Activated CD4-positive, alpha-beta memory T cell treated with anti-CD3 and anti-CD28 coated beads for 36 hours (primary cell): ENCODE measurements at regions of chr14 and their contacts with region 1.

Region 1: DNA sequence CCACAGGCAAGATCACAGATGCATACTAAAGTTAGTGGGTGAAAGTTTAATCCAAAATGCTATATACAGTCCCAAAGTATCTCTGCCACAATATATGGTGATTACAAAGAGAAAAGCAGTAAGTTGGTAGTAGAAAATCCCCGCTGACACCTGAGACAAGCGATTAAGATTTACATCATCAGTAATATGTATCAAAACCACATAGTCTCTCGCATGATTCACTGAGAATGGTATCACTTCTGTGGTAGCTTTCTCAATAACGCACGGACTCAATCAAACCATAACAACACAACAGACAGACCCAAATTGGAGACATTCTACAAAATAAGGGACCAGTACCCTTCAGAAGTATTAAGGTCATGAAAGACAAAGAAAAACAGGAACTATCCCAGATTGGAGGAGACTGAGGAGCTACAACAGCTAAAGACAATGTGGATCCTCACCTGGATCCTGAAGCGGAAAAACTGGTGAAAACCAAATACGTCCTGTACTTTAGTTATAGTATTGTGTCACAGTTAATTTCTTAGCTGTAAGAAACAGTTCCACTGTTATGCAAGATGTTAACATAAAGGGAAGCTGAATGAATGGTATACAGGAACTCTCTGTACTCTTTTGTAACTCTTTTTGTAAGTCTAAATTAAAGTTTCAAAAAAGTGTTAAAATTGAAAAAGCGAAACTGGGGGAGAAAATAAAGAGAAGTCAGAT is 51.0 kb downstream of the SPTLC2 start:
- DNase-seq: no peak
- H3K4me3 Mint-ChIP-seq: no peak overlapping the region
- H3K27ac Mint-ChIP-seq: peak overlapping the region; percentile 12
- H3K4me1 Mint-ChIP-seq: peaks cover 8% of the 10 kb centered on the region
- H3K27me3 Mint-ChIP-seq: no peaks in the 10 kb centered on the region

Region 2: DNA sequence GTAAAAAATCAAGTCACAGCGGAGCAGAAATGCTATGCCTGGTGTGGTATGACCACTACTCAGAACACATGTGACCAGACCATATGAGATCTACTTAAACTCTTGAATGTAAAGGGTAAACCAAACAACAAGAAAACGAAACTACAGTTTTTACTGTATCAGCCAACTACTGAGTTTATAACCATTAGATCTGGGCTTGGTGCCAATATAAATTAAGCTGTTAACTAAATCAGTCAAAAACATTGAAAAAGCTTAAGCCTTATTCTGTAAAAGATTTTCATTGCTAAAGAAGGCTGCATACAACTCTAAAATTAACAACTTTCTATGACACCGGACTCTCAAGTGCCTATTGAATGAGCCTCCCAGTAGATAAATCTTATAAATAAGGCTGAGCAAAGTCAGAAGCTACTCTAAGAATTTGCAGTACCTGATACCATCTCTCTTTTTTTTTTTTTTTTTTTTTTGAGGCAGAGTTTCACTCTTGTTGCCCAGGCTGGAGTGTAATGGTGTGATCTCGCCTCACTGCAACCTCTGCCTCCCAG is 15.6 kb after region 1 on chr14:
- CTCF ChIA-PET with region 1: no interaction called
- POLR2A ChIA-PET with region 1: no interaction called
- intact Hi-C with region 1: loop called (anchors 2 kb)
- DNase-seq: no peak
- H3K4me3 Mint-ChIP-seq: no peak overlapping the region
- H3K27ac Mint-ChIP-seq: peak overlapping the region; percentile 28
- H3K4me1 Mint-ChIP-seq: peaks cover 23% of the 10 kb centered on the region
- H3K27me3 Mint-ChIP-seq: no peaks in the 10 kb centered on the region

Region 3: GRCh38 chr14:77593501-77593961 is 28.1 kb after region 1 on chr14:
- CTCF ChIA-PET with region 1: no interaction called
- POLR2A ChIA-PET with region 1: no interaction called
- intact Hi-C with region 1: loop called (anchors 1 kb)
- DNase-seq: no peak
- H3K4me3 Mint-ChIP-seq: peak overlapping the region; percentile 21
- H3K27ac Mint-ChIP-seq: peak overlapping the region; percentile 83
- H3K4me1 Mint-ChIP-seq: peaks cover 40% of the 10 kb centered on the region
- H3K27me3 Mint-ChIP-seq: no peaks in the 10 kb centered on the region

Region 4: GRCh38 chr14:77660754-77661153 is 95.3 kb after region 1 on chr14:
- CTCF ChIA-PET with region 1: no interaction called
- POLR2A ChIA-PET with region 1: no interaction called
- intact Hi-C with region 1: no loop called
- DNase-seq: no peak
- H3K4me3 Mint-ChIP-seq: no peak overlapping the region
- H3K27ac Mint-ChIP-seq: no peak overlapping the region
- H3K4me1 Mint-ChIP-seq: no peaks in the 10 kb centered on the region
- H3K27me3 Mint-ChIP-seq: no peaks in the 10 kb centered on the region